ENCODE measurements at regions of chr7 and their contacts with region 1.

Region 1: GRCh38 chr7:130929896-130930659 is 196.1 kb upstream of the KLF14 start:
- DNase-seq: peak in 6 of 9 donors; percentile 27 to 62 (median 40)
- ATAC-seq: peak; percentile 69
- H3K4me3 ChIP-seq: no peak overlapping the region
- H3K4me3 Mint-ChIP-seq: peak overlapping the region in 8 of 10 donors; percentile 37 to 66 (median 51)
- H3K27ac ChIP-seq: peak overlapping the region; percentile 9
- H3K27ac Mint-ChIP-seq: peak overlapping the region in 8 of 9 donors; percentile 59 to 88 (median 78)
- H3K4me1 ChIP-seq: peaks cover 47 to 64% of the 10 kb centered on the region in 2 donors
- H3K4me1 Mint-ChIP-seq: peaks cover 68 to 98% (median 85%) of the 10 kb centered on the region in 7 donors
- H3K27me3 ChIP-seq: no peaks in the 10 kb centered on the region
- H3K27me3 Mint-ChIP-seq: no peaks in the 10 kb centered on the region

Region 2: GRCh38 chr7:130941322-130942210 is 11.5 kb after region 1 on chr7:
- CTCF ChIA-PET with region 1: interaction called, 3 read pairs
- POLR2A ChIA-PET with region 1: interaction called, 12 read pairs
- intact Hi-C with region 1: loop called (anchors 1 kb)
- DNase-seq: peak in 1 of 9 donors; percentile 37
- ATAC-seq: peak; percentile 42
- H3K4me3 ChIP-seq: peak overlapping the region; percentile 41
- H3K4me3 Mint-ChIP-seq: peak overlapping the region; percentile 72 to 90 (median 84)
- H3K27ac ChIP-seq: peak overlapping the region; percentile 78
- H3K27ac Mint-ChIP-seq: peak overlapping the region in 8 of 9 donors; percentile 88 to 96 (median 94)
- H3K4me1 ChIP-seq: peaks cover 56 to 69% of the 10 kb centered on the region in 2 donors
- H3K4me1 Mint-ChIP-seq: peaks cover 68 to 97% (median 92%) of the 10 kb centered on the region in 7 donors
- H3K27me3 ChIP-seq: no peaks in the 10 kb centered on the region
- H3K27me3 Mint-ChIP-seq: no peaks in the 10 kb centered on the region

Region 3: GRCh38 chr7:130951976-130952876 is 22.1 kb after region 1 on chr7:
- CTCF ChIA-PET with region 1: no interaction called
- POLR2A ChIA-PET with region 1: no interaction called
- intact Hi-C with region 1: no loop called
- DNase-seq: no peak
- ATAC-seq: no peak
- H3K4me3 ChIP-seq: no peak overlapping the region
- H3K4me3 Mint-ChIP-seq: peak overlapping the region in 3 of 10 donors; percentile 17 to 53 (median 23)
- H3K27ac ChIP-seq: no peak overlapping the region
- H3K27ac Mint-ChIP-seq: peak overlapping the region in 5 of 9 donors; percentile 5 to 95 (median 67)
- H3K4me1 ChIP-seq: peaks cover 57 to 91% of the 10 kb centered on the region in 2 donors
- H3K4me1 Mint-ChIP-seq: peaks cover 40 to 65% (median 62%) of the 10 kb centered on the region in 7 donors
- H3K27me3 ChIP-seq: no peaks in the 10 kb centered on the region
- H3K27me3 Mint-ChIP-seq: no peaks in the 10 kb centered on the region